ENCODE measurements at regions of chr13 and their contacts with region 1.

Region 1: GRCh38 chr13:27919934-27920676 is at the start of gene PDX1:
- DNase-seq: peak in 1 of 2 experiments; percentile 81
- H3K4me3 ChIP-seq: peak within 1 kb of the TSS in 2 of 4 experiments; percentile 7 to 49; a peak in 4 of 8 replicates
- H3K27ac ChIP-seq: no peak within 1 kb of the TSS
- H3K4me1 ChIP-seq: peaks cover 8 to 34% (median 22%) of the 10 kb centered on the region in 4 experiments
- H3K27me3 ChIP-seq: peaks cover 97 to 100% (median 100%) of the 10 kb centered on the region in 4 experiments
- CTCF ChIP-seq: no peak
- EP300 ChIP-seq: no peak
- POLR2A ChIP-seq: no peak
- RAD21 ChIP-seq: no peak
- total RNA-seq, gene PDX1: not detected in 2 replicates

Region 2: DNA sequence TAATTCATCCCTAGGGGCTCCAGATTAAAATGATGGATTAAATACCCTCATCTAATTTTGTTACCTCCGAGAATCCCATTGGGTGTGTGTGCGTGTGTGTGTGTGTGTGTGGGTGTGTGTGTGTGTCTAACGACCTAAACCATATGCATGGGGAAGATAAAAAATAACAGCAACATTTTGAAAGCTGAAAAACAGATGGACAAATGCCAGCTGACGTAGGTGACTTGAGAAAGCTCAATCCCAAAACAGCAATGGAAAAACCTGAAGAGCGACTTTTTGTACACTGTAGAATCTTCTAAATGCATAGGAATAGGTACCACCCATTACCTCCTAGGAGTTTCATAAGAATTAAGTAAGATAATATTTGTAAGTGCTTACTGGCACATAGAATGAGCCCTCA is 677.4 kb before region 1 on chr13:
- CTCF ChIA-PET with region 1: no interaction called
- POLR2A ChIA-PET with region 1: no interaction called
- DNase-seq: no peak
- H3K4me3 ChIP-seq: no peak overlapping the region
- H3K27ac ChIP-seq: no peak overlapping the region
- H3K4me1 ChIP-seq: peaks cover 0 to 10% (median 4%) of the 10 kb centered on the region in 4 experiments; a peak in 5 of 7 replicates
- H3K27me3 ChIP-seq: no peaks in the 10 kb centered on the region
- CTCF ChIP-seq: no peak
- EP300 ChIP-seq: no peak
- POLR2A ChIP-seq: no peak
- RAD21 ChIP-seq: no peak

Region 3: GRCh38 chr13:27960362-27961226 is 40.5 kb after region 1 on chr13:
- CTCF ChIA-PET with region 1: interaction called, 10 read pairs
- POLR2A ChIA-PET with region 1: interaction called, 5 read pairs
- DNase-seq: peak in 1 of 2 experiments; percentile 95
- H3K4me3 ChIP-seq: peak overlapping the region in 3 of 4 experiments; percentile 11 to 49 (median 26); a peak in 4 of 8 replicates
- H3K27ac ChIP-seq: no peak overlapping the region
- H3K4me1 ChIP-seq: peaks cover 7 to 20% (median 12%) of the 10 kb centered on the region in 4 experiments; a peak in 6 of 7 replicates
- H3K27me3 ChIP-seq: peaks cover 90 to 100% (median 98%) of the 10 kb centered on the region in 4 experiments
- CTCF ChIP-seq: peak in 2 of 3 experiments; percentile 81 to 83; a peak in 3 of 4 replicates
- EP300 ChIP-seq: no peak
- POLR2A ChIP-seq: no peak
- RAD21 ChIP-seq: peak; percentile 74 to 85